ENCODE measurements at regions of chr4 and their contacts with region 1.

Region 1: DNA sequence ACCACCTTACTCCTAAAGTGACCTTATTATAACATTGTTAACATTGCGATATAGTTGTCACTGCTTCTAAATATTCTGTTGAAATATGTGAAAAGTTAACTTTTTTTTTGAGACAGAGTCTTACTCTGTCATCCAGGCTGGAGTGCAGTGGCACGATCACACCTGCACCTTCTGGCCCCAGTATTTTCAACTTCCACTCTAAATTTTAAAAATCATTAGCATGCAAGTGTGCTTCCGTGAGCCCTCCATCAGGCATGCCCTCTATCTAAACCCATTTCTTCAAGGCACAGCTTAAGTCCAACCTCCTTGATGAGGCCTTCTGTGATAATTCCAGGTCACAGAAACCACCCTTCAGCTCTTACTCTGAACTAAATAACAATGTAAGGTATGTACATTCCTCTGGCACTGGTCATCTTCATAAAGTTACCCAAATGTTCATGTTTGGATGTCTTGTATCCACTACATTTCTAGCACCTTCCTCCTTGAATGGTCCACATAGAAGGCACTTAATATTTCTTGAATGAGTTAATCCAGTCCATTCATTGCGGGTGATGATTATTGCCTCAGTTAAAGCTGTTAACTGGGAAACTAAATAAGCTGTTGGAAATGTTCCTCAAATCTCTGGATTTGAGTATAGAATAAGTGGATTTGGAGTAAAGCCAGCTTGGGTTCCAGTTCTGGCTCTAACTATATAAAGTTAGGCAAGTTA is 38.6 kb upstream of the TMEM131L start:
- DNase-seq: no peak
- H3K4me3 ChIP-seq: no peak overlapping the region
- H3K27ac ChIP-seq: peak overlapping the region in 1 of 2 donors; percentile 19
- H3K4me1 ChIP-seq: peaks cover 0 to 11% of the 10 kb centered on the region in 2 donors
- H3K27me3 ChIP-seq: no peaks in the 10 kb centered on the region
- CTCF ChIP-seq: no peak

Region 2: DNA sequence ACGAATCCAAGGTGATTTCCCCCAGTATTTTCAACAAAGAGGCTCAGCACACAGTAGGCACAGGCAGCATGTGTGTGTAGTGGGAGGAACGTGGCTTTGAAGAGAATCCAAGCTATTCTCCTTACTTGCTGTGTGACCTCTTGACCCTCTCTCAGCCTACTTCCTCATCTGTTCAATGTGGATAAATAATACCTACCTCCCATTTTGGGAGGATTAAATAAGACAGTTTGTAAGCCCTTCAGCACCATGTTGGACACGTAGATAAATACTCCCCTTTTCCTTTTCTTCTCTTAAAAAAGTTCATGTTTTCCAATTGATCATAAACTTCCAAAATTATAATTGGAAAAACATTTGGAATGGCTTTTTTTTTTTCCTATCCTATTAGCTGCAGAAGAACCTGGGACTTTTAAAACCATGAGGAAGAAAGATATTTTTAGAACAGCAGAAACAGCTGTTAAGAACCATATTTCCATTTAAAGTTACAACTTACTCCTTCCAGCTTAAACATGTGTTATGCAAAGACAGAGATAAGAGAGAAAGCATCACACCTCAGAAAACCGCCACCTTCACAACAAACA is 17.5 kb before region 1 on chr4:
- intact Hi-C with region 1: loop called (anchors 2 kb)
- DNase-seq: no peak
- H3K4me3 ChIP-seq: no peak overlapping the region
- H3K27ac ChIP-seq: peak overlapping the region; percentile 59 to 74
- H3K4me1 ChIP-seq: peaks cover 3 to 11% of the 10 kb centered on the region in 2 donors
- H3K27me3 ChIP-seq: no peaks in the 10 kb centered on the region
- CTCF ChIP-seq: no peak